Astrocyte of the cerebellum (primary cell): ENCODE measurements at regions of chr15 and their contacts with region 1.

Region 1: DNA sequence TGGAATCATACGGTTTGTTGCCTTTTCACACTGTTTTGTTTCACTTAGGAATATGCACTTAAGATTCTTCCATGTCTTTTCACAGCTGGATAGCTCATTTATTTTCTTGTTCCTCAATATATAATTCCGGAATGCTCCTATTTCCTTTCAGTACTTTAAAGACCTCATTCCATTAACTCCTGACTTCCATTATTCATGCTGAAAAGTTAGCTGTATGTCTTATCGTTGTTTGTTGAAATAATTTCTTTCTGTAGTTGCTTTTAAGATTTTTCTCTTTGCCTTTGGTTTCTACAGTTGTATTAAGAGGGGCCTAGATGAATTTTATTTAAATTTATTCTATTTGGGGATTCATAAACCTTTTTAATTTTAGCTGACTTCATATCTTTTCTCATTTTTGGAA is 122.2 kb downstream of the ANXA2 start:
- DNase-seq: no peak
- H3K4me3 ChIP-seq: no peak overlapping the region
- CTCF ChIP-seq: no peak

Region 2: DNA sequence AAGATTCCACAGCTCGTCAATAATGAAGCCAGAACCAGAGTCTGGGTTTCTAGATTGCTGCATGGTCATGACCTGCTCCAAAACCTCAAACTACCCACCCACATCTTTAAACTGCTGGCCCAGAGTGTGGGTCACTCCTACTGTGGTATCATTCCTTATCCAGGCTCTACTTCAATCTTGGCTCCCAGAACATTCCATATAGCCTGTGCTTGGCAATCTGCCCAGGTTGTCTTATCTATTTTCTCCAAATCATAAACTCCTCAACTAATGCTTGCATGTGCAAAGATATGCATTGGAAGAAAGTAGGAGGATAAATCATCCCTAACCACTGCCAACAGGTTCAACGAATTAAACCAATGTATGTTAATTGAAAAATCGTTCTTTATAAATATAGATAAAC is 47.5 kb before region 1 on chr15:
- in situ Hi-C with region 1: loop called (anchors 5 kb)
- DNase-seq: no peak
- H3K4me3 ChIP-seq: no peak overlapping the region
- CTCF ChIP-seq: no peak